Activated CD4-positive, alpha-beta memory T cell treated with anti-CD3 and anti-CD28 coated beads for 36 hours (primary cell): ENCODE measurements at regions of chr16 and their contacts with region 1.

Region 1: GRCh38 chr16:31179747-31180459 is at the start of gene FUS:
- DNase-seq: peak; percentile 93
- H3K4me3 Mint-ChIP-seq: peak within 1 kb of the TSS; percentile 86
- H3K27ac Mint-ChIP-seq: peak within 1 kb of the TSS; percentile 99
- H3K4me1 Mint-ChIP-seq: peaks cover 44% of the 10 kb centered on the region
- H3K27me3 Mint-ChIP-seq: peaks cover 4% of the 10 kb centered on the region
- total RNA-seq, gene FUS: 459 to 489 TPM

Region 2: DNA sequence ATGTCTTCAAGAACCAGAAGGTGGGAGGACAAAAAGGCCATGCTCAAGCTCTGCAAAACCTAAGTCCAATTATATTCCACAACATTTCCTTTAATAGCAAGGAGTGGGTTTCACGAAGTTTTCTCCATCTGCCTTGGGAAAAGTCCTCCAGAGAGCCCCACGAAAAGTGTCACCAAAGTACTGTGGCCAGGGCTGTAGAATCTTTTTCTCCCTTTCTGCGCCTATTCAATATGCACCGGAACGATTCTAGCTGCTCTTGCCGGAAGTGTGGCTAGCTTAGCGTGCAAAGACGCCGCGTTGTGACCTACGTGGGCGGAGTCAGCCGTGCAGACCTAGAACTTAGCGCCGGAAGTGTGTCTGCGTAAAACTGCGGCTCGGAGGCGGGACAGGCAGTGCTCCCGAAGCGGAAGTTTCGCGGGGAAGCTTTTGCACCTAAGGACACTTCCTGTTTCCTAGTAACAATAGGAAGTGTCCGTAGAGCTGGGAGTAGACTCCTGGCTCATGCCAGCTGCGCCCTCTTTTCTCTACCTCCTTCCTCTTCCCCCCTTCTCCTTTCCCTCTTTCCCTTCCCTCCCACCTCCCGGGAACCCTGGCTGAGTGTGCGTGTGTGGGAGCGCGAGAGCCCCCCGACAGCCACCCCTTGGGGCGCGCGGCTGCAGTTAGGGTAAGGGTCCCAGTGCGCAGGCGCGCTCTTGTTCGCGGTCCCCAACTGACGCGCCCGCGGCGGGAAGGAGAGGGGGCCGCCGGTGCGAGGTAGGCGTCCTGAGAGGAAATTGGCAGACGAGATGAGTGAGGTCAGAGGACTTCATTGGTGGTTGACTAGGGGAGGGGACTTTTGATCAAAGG is 105.7 kb before region 1 on chr16 and contains the starts of genes ZNF646 and ZNF668:
- CTCF ChIA-PET with region 1: no interaction called
- POLR2A ChIA-PET with region 1: interaction called, 15 read pairs
- intact Hi-C with region 1: loop called (anchors 1 kb)
- DNase-seq: peak; percentile 99
- H3K4me3 Mint-ChIP-seq: peak within 1 kb of the TSS; percentile 98
- H3K27ac Mint-ChIP-seq: peak within 1 kb of the TSS; percentile 97
- H3K4me1 Mint-ChIP-seq: peaks cover 30% of the 10 kb centered on the region
- H3K27me3 Mint-ChIP-seq: no peaks in the 10 kb centered on the region
- total RNA-seq, gene ZNF646: 18.6 to 19.9 TPM
- total RNA-seq, gene ZNF668: 11.4 to 13.3 TPM

Region 3: DNA sequence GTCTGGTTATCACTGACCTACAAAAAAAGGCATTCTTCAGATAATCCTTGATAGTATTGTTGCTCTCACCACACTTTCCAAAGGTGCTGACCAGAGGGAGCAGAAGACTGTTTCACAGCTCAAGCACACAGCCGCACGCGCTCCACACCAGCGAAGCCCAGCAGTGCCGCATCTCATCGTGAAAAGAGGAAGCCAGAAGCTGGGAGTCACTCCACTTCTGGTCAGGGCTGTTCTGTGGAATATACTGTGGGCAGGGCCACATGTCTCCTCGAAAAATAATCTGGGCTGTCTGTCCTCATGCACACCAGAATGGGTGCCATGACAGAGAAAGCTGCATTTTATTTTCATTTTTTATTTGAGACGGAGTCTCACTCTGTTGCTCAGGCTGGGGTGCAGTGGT is 22.8 kb before region 1 on chr16:
- CTCF ChIA-PET with region 1: interaction called, 3 read pairs
- POLR2A ChIA-PET with region 1: interaction called, 3 read pairs
- intact Hi-C with region 1: loop called (anchors 2 kb)
- DNase-seq: no peak
- H3K4me3 Mint-ChIP-seq: no peak overlapping the region
- H3K27ac Mint-ChIP-seq: no peak overlapping the region
- H3K4me1 Mint-ChIP-seq: peaks cover 8% of the 10 kb centered on the region
- H3K27me3 Mint-ChIP-seq: peaks cover 4% of the 10 kb centered on the region

Region 4: DNA sequence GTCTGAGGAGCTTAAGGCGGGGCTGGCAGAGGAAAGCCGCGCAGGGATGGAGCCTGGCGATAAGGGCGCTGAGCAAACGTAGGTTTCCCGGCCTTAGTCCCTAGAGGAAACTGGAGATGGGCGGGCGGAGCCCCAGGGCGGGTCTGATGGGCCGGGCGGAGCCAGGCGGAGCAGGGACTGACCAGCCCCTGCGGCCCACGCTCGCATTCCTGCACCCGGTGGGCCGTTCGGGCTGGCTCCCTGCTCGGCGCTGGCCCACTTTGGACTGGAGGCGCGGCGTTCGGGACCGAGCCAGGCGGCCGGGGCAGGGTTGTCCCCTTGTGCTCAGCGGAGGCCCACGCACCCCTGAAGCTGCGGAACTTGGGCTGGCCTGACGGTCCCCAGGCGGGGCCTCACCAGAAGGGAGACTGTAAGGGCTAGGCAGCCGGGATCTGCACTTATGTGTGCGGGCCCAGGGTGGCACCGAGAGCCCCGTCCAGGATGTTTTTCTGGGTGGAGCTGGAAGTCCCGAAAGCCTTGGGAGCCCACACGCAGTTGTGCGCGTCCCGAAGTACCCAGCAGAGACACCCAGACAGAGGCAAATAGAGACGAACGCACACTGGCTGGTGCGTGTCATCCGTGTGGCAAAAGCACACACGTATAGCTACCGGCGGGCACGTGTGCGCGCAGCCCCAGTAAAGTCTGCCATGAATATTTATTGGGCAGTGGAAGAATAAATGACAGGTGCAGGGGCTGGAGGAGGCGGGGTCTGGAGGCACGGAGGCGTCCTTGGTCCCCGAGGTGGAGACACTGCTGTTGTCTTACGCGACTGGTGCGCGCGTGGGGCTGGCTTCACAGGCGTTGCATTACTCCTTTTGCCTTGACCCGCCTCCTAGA is 35.6 kb after region 1 on chr16:
- CTCF ChIA-PET with region 1: interaction called, 3 read pairs
- POLR2A ChIA-PET with region 1: interaction called, 10 read pairs
- intact Hi-C with region 1: no loop called
- DNase-seq: peak; percentile 32
- H3K4me3 Mint-ChIP-seq: peak overlapping the region; percentile 46
- H3K27ac Mint-ChIP-seq: no peak overlapping the region
- H3K4me1 Mint-ChIP-seq: peaks cover 21% of the 10 kb centered on the region
- H3K27me3 Mint-ChIP-seq: peaks cover 44% of the 10 kb centered on the region

Region 5: GRCh38 chr16:31528523-31529397 is 348.9 kb after region 1 on chr16:
- CTCF ChIA-PET with region 1: no interaction called
- POLR2A ChIA-PET with region 1: no interaction called
- intact Hi-C with region 1: no loop called
- DNase-seq: no peak
- H3K4me3 Mint-ChIP-seq: no peak overlapping the region
- H3K27ac Mint-ChIP-seq: no peak overlapping the region
- H3K4me1 Mint-ChIP-seq: peaks cover 12% of the 10 kb centered on the region
- H3K27me3 Mint-ChIP-seq: peaks cover 14% of the 10 kb centered on the region